ENCODE measurements at regions of chr2 and their contacts with region 1.

Region 1: DNA sequence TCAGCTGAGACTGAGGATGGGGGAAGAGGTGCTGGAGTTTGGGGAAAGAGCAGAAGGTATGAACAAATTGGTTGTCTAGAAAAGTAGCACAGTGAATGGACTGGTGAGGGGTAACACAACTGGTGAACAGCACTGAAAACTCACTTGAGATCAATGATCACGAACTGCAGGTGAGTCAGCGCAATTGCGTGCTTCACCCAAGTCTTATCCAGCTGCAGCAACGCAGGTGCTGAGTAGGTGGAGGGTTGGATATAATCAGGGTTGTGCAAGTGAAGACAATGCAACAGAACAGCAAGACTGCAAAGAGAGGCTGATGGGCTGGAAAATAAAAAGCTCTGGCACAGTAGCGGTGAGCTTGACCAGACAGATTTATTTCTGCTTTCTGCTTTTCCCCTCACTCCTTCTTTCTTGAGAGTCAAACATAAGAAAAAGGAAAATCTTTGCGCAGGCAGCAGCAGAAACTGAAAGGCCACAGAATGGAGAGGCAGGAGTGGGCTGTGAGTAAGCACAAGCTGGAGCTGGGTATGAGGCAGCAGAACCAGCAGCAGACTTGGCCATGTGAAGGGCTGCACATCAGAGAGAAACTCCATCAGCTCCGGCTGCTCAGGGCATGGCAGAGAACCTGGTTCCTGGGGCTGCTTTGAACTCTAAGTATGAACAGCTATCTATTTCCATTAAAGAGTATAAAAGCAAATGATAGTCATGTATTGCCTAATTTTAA is 99.4 kb upstream of the ARL5A start:
- DNase-seq: no peak
- ATAC-seq: peak; percentile 80
- H3K4me3 Mint-ChIP-seq: no peak overlapping the region
- H3K27ac Mint-ChIP-seq: peak overlapping the region; percentile 54; the same call in 1 of the 2 replicates
- H3K4me1 Mint-ChIP-seq: peaks cover 14% of the 10 kb centered on the region
- H3K27me3 Mint-ChIP-seq: no peaks in the 10 kb centered on the region
- CTCF ChIP-seq: no peak

Region 2: GRCh38 chr2:151638191-151638933 is 289.3 kb before region 1 on chr2:
- CTCF ChIA-PET with region 1: no interaction called
- POLR2A ChIA-PET with region 1: interaction called, 10 read pairs
- DNase-seq: no peak
- ATAC-seq: no peak
- H3K4me3 Mint-ChIP-seq: no peak overlapping the region
- H3K27ac Mint-ChIP-seq: no peak overlapping the region
- H3K4me1 Mint-ChIP-seq: no peaks in the 10 kb centered on the region
- H3K27me3 Mint-ChIP-seq: no peaks in the 10 kb centered on the region
- CTCF ChIP-seq: no peak

Region 3: GRCh38 chr2:151782378-151783132 is 145.1 kb before region 1 on chr2:
- CTCF ChIA-PET with region 1: no interaction called
- POLR2A ChIA-PET with region 1: no interaction called
- DNase-seq: no peak
- ATAC-seq: no peak
- H3K4me3 Mint-ChIP-seq: no peak overlapping the region
- H3K27ac Mint-ChIP-seq: no peak overlapping the region
- H3K4me1 Mint-ChIP-seq: peaks cover 7% of the 10 kb centered on the region
- H3K27me3 Mint-ChIP-seq: no peaks in the 10 kb centered on the region
- CTCF ChIP-seq: no peak

Region 4: DNA sequence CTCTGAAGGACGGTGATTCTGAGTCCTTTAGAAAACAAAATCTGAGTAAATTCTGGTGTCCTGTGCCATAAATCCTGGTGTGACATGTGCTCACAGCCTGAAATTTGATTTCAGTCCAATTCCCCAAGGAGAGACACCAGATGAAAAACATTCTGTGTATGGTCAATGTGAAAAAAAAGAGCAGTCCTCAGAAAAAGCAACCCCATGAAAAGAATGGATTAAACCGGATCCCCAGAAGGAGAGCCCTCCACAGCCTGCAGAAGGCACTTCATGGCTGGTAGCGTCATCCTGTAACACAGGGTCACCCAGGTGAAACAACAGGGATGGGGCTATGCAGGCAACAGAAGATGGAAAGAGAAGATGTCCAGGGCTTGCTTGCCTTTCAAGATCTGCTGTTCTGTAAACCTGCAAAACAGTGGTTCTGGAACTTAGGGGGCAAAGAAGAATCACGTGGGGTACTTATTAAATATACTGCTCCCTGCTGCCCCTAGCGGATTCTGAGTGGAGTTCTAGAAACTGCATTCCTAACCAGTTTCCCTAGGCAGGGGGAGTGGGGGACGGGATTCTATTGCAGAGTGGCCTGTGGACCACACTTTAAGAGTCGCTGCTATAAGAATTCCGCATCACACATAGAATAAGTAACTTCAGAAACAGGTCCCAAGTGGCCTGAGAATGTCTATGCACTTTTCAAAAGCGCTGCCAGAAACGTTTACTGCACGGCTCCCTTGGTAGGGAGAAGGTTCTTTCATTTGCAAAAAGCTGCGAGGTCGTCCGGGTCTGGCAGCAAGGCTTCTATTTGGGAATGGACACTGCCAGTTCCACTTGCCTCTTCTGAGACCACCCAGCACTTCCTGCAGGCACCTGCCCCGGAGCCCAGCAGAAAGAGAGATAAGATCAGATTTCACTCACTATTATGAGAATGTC is 19.5 kb after region 1 on chr2:
- CTCF ChIA-PET with region 1: interaction called, 10 read pairs
- POLR2A ChIA-PET with region 1: no interaction called
- DNase-seq: peak; percentile 62
- ATAC-seq: peak; percentile 98
- H3K4me3 Mint-ChIP-seq: peak overlapping the region; percentile 43
- H3K27ac Mint-ChIP-seq: peak overlapping the region; percentile 51
- H3K4me1 Mint-ChIP-seq: peaks cover 12% of the 10 kb centered on the region
- H3K27me3 Mint-ChIP-seq: peaks cover 3% of the 10 kb centered on the region; the same call in 1 of the 2 replicates
- CTCF ChIP-seq: peak; percentile 65

Region 5: GRCh38 chr2:152025678-152026287 is 98.1 kb after region 1 on chr2:
- CTCF ChIA-PET with region 1: no interaction called
- POLR2A ChIA-PET with region 1: no interaction called
- DNase-seq: peak; percentile 86
- ATAC-seq: peak; percentile 97
- H3K4me3 Mint-ChIP-seq: peak overlapping the region; percentile 66
- H3K27ac Mint-ChIP-seq: no peak overlapping the region
- H3K4me1 Mint-ChIP-seq: no peaks in the 10 kb centered on the region
- H3K27me3 Mint-ChIP-seq: peaks cover 2% of the 10 kb centered on the region; the same call in 1 of the 2 replicates
- CTCF ChIP-seq: peak; percentile 97